ENCODE measurements at regions of chr10 and their contacts with region 1.

Region 1: GRCh38 chr10:1420661-1421362 is 316.5 kb downstream of the ADARB2 start:
- DNase-seq: peak; percentile 83
- H3K4me3 Mint-ChIP-seq: peak overlapping the region; percentile 44
- H3K27ac Mint-ChIP-seq: no peak overlapping the region
- H3K4me1 Mint-ChIP-seq: peaks cover 7% of the 10 kb centered on the region
- H3K27me3 Mint-ChIP-seq: peaks cover 20% of the 10 kb centered on the region

Region 2: DNA sequence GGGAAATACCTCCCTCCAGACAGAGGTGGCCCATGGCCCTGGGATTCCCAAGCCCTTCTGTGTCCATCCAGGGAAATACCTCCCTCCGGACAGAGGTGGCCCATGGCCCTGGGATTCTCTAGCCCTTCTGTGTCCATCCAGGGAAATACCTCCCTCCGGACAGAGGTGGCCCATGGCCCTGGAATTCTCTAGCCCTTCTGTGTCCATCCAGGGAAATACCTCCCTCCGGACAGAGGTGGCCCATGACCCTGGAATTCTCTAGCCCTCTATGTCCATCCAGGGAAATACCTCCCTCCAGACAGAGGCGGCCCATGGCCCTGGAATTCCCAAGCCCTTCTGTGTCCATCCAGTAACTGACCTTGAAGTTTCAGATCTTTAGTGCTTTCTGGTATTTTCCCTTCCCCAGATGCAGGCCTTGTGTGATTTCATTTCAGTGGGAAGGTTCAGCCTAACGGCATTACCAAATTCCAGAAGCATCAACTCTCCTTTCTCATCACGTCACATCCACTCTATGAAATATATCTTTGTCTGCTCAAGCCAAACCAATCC is 702.6 kb before region 1 on chr10:
- CTCF ChIA-PET with region 1: no interaction called
- intact Hi-C with region 1: no loop called
- DNase-seq: no peak
- H3K4me3 Mint-ChIP-seq: no peak overlapping the region
- H3K27ac Mint-ChIP-seq: no peak overlapping the region
- H3K4me1 Mint-ChIP-seq: no peaks in the 10 kb centered on the region
- H3K27me3 Mint-ChIP-seq: peaks cover 8% of the 10 kb centered on the region

Region 3: DNA sequence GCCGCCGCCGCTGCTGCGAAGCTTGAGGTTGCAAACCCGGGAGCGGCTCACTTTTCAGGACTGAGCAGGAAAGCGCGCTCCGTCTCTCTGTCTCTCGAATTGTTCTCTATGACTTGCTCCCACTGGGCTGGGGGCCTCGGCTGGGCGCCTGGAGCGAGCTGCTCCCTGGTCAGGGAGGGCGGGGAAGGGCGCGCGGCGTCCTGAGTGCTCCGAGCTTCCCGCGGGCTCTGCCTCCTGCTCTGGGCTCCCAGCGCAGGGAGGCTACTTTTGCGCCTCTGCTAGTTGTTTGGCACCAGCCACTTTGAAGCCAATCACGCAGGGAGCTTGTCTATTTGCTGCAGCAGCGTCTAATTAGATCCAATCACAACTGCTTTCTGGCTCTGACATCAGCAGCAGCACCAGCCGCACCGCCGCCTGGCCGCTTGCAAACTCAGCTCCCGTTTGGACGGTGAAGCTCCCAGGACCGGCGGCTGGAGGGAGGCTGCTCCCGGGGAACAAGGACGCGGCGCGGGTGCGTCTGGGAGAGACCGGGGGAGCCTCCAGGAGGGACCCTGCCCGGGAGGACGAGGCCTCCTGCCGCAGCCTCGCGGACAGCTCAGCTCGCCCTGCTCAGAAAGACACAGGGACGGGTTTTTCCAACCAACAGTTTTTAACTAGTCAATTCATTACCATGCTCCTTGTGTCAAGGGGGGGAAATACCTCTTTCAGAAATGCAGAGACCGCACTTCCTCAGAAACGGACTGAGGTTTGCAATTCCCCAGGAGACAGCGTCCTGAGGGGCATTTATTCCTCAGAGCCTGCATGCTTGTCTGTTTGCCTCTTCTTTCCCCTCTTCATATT is 316.6 kb after region 1 on chr10 and contains the start of gene ADARB2:
- CTCF ChIA-PET with region 1: no interaction called
- intact Hi-C with region 1: loop called (anchors 10 kb)
- DNase-seq: peak; percentile 44
- H3K4me3 Mint-ChIP-seq: peak within 1 kb of the TSS; percentile 60
- H3K27ac Mint-ChIP-seq: no peak within 1 kb of the TSS
- H3K4me1 Mint-ChIP-seq: peaks cover 19% of the 10 kb centered on the region
- H3K27me3 Mint-ChIP-seq: peaks cover 75% of the 10 kb centered on the region
- total RNA-seq, gene ADARB2: 1.3 to 1.4 TPM

Measured in activated naive CD4-positive, alpha-beta T cell treated with anti-CD3 and anti-CD28 coated beads for 36 hours (primary cell).